A549 (cell line): ENCODE measurements at regions of chr5 and their contacts with region 1.

Region 1: GRCh38 chr5:32038530-32038929 is 135.6 kb downstream of the GOLPH3 start:
- DNase-seq: peak in 1 of 2 experiments; percentile 18
- ATAC-seq: peak; percentile 70 to 78; a peak in 5 of 6 replicates
- H3K4me3 ChIP-seq: no peak overlapping the region
- H3K27ac ChIP-seq: peak overlapping the region; percentile 25 to 36; a peak in 1 of 6 replicates
- H3K4me1 ChIP-seq: peaks cover 15% of the 10 kb centered on the region
- CTCF ChIP-seq: no peak
- EP300 ChIP-seq: no peak
- POLR2A ChIP-seq: no peak
- RAD21 ChIP-seq: no peak

Region 2: DNA sequence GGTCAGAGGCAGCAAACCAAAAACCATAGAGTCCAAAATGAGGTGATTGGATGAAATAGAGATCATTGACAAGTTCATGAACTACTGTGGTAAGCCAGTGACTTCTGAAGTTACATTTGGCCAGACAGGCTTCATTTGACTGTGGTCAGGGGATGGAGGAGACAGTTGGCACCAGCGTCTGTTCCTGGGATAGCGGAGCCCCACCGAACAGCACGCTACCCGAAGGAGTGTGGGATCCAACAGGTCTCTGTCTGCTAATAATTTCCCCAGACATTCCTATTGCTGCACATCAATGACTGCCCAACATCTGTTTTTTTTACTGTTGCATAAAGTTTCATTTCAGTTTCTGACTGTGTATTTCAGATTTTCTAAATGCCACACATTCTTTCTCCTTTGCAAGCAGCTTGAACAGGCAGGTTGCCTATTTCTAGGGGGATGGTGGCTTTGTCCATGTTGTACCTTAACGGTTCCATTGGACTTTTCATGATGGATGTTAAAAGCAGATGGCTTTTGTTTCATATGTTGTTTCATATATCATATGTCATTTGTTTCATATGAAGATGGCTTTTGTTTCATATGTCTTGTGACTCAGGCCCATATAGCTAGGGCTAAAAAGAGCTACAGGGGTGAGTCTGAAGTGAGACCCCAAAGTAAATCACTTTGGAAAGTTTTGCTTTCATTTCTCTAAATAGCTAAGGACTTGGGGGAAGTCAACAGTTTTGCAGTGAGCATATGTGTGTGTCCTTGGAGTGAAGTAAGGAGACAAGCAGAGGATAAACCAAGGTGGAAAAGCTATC is 45.2 kb before region 1 on chr5:
- CTCF ChIA-PET with region 1: no interaction called
- POLR2A ChIA-PET with region 1: no interaction called
- DNase-seq: no peak
- ATAC-seq: no peak
- H3K4me3 ChIP-seq: no peak overlapping the region
- H3K27ac ChIP-seq: peak overlapping the region; percentile 46 to 65; a peak in 3 of 6 replicates
- H3K4me1 ChIP-seq: peaks cover 39% of the 10 kb centered on the region
- CTCF ChIP-seq: no peak
- EP300 ChIP-seq: no peak
- POLR2A ChIP-seq: no peak
- RAD21 ChIP-seq: no peak

Region 3: GRCh38 chr5:32027717-32028321 is 10.7 kb before region 1 on chr5:
- CTCF ChIA-PET with region 1: interaction called, 11 read pairs
- POLR2A ChIA-PET with region 1: no interaction called
- DNase-seq: peak; percentile 47 to 73
- ATAC-seq: peak; percentile 92 to 93
- H3K4me3 ChIP-seq: no peak overlapping the region
- H3K27ac ChIP-seq: peak overlapping the region; percentile 75
- H3K4me1 ChIP-seq: peaks cover 34% of the 10 kb centered on the region
- CTCF ChIP-seq: no peak
- EP300 ChIP-seq: peak in 1 of 2 experiments; percentile 47; a peak in 1 of 5 replicates
- POLR2A ChIP-seq: no peak
- RAD21 ChIP-seq: 0 out of 5 replicates have a peak, but pooled peaks of 1 of the 2 experiments have one; percentile 17